ENCODE measurements at regions of chr12 and their contacts with region 1.

Region 1: GRCh38 chr12:66688846-66689439 is 10.1 kb upstream of the GRIP1 start:
- DNase-seq: peak; percentile 41 to 61 (median 54)
- ATAC-seq: peak; percentile 83 to 97 (median 92)
- H3K4me3 ChIP-seq: no peak overlapping the region
- H3K27ac ChIP-seq: no peak overlapping the region
- H3K4me1 ChIP-seq: no peaks in the 10 kb centered on the region
- H3K27me3 ChIP-seq: no peaks in the 10 kb centered on the region
- CTCF ChIP-seq: peak in 3 of 4 donors; percentile 32 to 36 (median 33)

Region 2: GRCh38 chr12:66860752-66861750 is 172.1 kb after region 1 on chr12:
- intact Hi-C with region 1: loop called in 1 of 3 experiments (anchors 10 kb)
- DNase-seq: peak in 5 of 6 donors; percentile 17 to 73 (median 50)
- ATAC-seq: peak in 3 of 4 donors; percentile 70 to 80 (median 78)
- H3K4me3 ChIP-seq: no peak overlapping the region
- H3K27ac ChIP-seq: no peak overlapping the region
- H3K4me1 ChIP-seq: no peaks in the 10 kb centered on the region
- H3K27me3 ChIP-seq: no peaks in the 10 kb centered on the region
- CTCF ChIP-seq: peak; percentile 69 to 88 (median 76)

Measured in pancreas (tissue), 10 donors.